ENCODE measurements at regions of chr11 and their contacts with region 1.

Region 1: DNA sequence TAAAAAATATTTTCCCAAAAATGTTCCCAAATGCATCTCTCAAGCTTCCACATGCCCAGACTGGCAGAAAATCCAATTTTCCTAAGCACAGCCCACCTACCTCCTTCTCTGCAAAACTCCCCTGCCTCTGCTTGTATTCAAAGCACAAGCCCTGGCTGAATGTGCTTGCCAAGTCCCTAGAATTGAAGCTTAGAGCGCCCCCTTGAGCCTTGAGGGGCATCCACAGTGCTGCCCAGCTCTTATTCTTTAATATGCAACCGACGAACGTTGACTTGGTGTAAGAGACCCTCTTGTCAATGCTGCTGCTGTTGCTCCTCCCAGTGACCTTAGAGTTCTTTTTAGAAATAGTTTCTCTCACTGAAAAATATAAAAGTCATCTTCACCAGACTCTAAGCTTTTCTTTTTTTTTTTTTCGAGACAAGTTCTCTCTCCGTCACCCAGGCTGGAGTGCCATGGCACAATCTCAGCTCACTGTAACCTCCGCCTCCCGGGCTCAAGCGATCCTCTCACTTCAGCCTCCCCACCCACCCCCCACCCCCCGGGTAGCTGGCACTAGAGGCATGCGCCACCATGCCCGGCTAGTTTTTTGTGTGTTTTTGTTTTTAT is 63.5 kb upstream of the CAPRIN1 start:
- DNase-seq: peak; percentile 83
- ATAC-seq: peak; percentile 89
- H3K4me3 Mint-ChIP-seq: no peak overlapping the region
- H3K27ac Mint-ChIP-seq: no peak overlapping the region
- H3K4me1 Mint-ChIP-seq: peaks cover 12% of the 10 kb centered on the region
- H3K27me3 Mint-ChIP-seq: peaks cover 4% of the 10 kb centered on the region

Region 2: GRCh38 chr11:33736148-33736809 is 251.8 kb before region 1 on chr11 and contains the start of gene CD59:
- CTCF ChIA-PET with region 1: no interaction called
- DNase-seq: peak; percentile 87
- ATAC-seq: peak; percentile 83
- H3K4me3 Mint-ChIP-seq: peak within 1 kb of the TSS; percentile 82
- H3K27ac Mint-ChIP-seq: peak within 1 kb of the TSS; percentile 71
- H3K4me1 Mint-ChIP-seq: peaks cover 29% of the 10 kb centered on the region
- H3K27me3 Mint-ChIP-seq: peaks cover 37% of the 10 kb centered on the region
- total RNA-seq, gene CD59: 54.1 to 70.5 TPM

Region 3: DNA sequence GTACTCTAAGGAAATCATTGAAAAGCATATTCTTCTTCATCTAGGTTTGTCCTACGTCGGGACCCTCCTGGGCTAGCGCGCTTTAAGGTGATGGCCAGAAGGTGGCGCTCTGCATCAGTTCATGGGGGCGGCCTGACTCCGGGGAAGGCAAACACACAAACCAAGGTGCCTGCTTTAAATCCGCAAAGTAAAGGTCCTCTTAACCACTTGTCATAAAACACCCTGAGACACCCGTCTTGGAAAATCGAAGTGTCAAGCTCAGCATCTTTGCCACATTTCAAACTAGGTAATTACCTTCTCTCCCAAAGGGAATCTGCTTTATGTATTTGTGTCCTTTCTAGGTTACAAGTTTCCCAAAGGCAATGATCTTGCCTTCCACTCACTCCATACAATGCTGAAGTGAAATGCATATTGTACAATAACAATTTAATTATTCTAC is 130.1 kb before region 1 on chr11:
- CTCF ChIA-PET with region 1: interaction called, 37 read pairs
- DNase-seq: peak; percentile 75
- ATAC-seq: peak; percentile 78
- H3K4me3 Mint-ChIP-seq: no peak overlapping the region
- H3K27ac Mint-ChIP-seq: no peak overlapping the region
- H3K4me1 Mint-ChIP-seq: no peaks in the 10 kb centered on the region
- H3K27me3 Mint-ChIP-seq: peaks cover 77% of the 10 kb centered on the region

Region 4: DNA sequence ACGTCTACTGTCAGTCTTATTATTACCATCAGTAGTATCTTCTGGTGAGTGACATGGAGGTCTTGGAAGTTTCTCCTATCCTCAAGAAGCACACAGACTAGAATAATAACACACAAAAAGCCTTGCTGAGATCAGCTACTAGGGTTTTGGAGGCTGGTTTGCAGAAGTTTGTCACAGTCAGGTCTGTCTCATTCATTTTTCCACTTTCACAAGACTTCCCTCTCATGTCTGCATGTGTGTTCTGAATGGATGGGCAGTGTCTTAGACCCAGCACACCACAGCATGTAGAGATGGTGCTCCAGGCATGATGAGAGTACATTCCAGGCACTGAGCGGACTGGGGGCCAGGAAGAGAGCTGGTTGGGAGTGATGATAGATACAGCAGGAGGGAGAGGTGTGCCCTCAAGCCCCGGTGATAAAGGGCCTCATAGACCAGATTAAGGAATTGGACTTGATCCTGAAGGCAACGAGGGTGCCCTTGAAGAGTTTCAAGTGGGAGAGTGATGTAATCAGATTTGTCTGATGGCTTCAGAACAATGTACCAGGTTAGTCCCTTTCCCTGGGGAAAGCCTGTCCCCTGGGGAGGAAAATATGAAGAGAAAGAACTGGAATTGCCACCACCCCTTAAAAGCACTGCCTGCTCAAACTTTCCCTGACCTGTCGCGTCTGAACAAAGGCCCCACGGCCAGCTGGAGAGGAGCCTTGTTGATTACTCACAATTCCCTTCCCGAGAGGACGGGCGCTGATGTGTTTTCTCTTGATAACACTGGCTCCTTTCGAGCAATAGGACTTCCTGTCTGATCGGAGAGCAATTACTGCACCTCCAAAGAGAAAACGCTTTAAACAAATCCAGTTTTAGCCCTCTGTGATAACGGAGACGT is 51.1 kb before region 1 on chr11:
- CTCF ChIA-PET with region 1: no interaction called
- DNase-seq: no peak
- ATAC-seq: no peak
- H3K4me3 Mint-ChIP-seq: no peak overlapping the region
- H3K27ac Mint-ChIP-seq: no peak overlapping the region
- H3K4me1 Mint-ChIP-seq: no peaks in the 10 kb centered on the region
- H3K27me3 Mint-ChIP-seq: no peaks in the 10 kb centered on the region

Region 5: DNA sequence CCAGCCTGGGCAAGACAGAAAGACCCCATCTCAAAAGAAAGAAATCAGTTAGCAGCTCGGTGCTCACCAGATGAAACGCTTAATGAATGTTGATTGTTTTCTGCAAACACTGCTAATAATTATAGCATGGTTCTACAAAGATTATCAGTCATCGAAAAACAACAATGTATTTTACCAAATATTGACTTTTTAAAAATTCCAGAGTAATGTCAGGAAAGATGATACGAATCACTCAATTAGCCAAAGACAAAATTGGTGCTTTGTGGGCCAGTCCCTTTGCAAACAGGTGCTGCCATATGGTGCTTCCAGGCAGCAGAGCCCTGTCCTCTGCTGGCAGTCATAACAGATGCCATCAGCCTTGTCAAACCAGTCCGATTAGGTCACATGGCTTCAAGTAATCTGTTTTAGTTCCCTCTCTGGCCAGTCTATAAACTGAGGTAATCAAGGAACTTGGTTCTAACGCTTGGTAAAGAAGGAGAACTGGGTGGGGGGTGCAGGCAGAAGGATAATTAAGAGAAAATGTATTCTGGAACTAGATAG is 14.3 kb after region 1 on chr11:
- CTCF ChIA-PET with region 1: interaction called, 20 read pairs
- DNase-seq: no peak
- ATAC-seq: no peak
- H3K4me3 Mint-ChIP-seq: no peak overlapping the region
- H3K27ac Mint-ChIP-seq: no peak overlapping the region
- H3K4me1 Mint-ChIP-seq: peaks cover 12% of the 10 kb centered on the region
- H3K27me3 Mint-ChIP-seq: peaks cover 77% of the 10 kb centered on the region

Region 6: DNA sequence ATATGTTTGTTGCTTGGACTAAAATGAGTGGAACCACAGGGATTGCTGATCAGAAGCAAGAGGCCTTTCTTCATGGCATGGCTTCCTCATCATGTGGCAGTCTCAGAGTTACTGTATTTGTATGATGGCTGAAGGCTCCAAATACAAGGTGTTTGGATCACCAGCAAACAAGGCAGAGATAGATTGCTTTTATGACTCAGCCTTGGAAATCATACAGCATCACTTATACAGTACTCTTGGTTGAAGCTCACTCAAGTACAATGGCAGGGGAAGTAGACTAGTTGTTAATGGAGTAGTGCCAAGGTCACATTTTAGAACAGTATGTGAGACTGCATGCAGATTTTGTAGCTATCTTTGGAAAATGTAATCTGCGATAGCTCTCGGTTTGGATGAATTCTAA is 80.0 kb after region 1 on chr11:
- CTCF ChIA-PET with region 1: no interaction called
- DNase-seq: no peak
- ATAC-seq: no peak
- H3K4me3 Mint-ChIP-seq: no peak overlapping the region
- H3K27ac Mint-ChIP-seq: peak overlapping the region; percentile 14
- H3K4me1 Mint-ChIP-seq: peaks cover 57% of the 10 kb centered on the region
- H3K27me3 Mint-ChIP-seq: no peaks in the 10 kb centered on the region

Region 7: GRCh38 chr11:34351687-34352469 is 363.8 kb after region 1 on chr11:
- CTCF ChIA-PET with region 1: no interaction called
- DNase-seq: no peak
- ATAC-seq: no peak
- H3K4me3 Mint-ChIP-seq: no peak overlapping the region
- H3K27ac Mint-ChIP-seq: no peak overlapping the region
- H3K4me1 Mint-ChIP-seq: peaks cover 28% of the 10 kb centered on the region
- H3K27me3 Mint-ChIP-seq: peaks cover 54% of the 10 kb centered on the region